ENCODE measurements at regions of chr3 and their contacts with region 1.

Region 1: DNA sequence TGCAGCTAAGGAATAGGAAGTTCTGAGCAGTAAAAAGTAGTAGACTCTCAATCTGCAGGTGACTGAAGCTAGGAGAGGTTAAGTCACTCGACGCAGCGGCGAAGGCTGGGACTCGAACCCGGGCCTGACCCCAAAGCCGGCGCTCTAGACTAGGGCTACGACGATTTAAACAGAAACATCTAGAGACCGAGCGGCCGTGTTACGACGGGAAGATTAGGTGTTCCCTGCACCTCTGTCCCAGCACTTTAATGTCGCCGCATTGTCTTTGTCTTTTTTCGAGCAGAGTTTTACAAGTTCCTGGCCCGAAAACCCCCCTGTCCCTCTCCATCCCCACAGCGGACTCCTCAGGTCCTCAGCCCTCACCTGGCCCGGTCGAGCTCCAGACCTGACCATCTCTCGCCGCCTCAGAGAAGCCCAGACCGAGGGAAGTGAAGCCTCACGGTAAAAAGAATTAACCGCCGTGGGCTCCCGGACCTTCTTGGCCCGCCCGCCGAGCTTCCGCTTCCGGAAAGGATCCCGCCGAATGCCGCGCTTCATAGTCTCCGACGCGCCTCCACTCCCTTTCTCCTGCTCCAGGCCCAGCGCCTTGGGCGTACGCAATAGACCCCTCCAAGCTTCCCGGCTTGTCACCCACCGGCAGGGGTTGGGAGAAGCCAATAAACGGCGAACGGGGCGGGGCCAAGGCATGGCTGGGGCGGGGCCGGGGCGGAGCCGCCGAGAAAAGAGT is at the start of gene CCDC14:
- DNase-seq: peak; percentile 68
- H3K4me3 Mint-ChIP-seq: peak within 1 kb of the TSS; percentile 95
- H3K27ac Mint-ChIP-seq: peak within 1 kb of the TSS; percentile 88
- H3K4me1 Mint-ChIP-seq: peaks cover 30% of the 10 kb centered on the region
- H3K27me3 Mint-ChIP-seq: peaks cover 17% of the 10 kb centered on the region
- total RNA-seq, gene CCDC14: 37.3 and 43.7 TPM in 2 replicates

Region 2: DNA sequence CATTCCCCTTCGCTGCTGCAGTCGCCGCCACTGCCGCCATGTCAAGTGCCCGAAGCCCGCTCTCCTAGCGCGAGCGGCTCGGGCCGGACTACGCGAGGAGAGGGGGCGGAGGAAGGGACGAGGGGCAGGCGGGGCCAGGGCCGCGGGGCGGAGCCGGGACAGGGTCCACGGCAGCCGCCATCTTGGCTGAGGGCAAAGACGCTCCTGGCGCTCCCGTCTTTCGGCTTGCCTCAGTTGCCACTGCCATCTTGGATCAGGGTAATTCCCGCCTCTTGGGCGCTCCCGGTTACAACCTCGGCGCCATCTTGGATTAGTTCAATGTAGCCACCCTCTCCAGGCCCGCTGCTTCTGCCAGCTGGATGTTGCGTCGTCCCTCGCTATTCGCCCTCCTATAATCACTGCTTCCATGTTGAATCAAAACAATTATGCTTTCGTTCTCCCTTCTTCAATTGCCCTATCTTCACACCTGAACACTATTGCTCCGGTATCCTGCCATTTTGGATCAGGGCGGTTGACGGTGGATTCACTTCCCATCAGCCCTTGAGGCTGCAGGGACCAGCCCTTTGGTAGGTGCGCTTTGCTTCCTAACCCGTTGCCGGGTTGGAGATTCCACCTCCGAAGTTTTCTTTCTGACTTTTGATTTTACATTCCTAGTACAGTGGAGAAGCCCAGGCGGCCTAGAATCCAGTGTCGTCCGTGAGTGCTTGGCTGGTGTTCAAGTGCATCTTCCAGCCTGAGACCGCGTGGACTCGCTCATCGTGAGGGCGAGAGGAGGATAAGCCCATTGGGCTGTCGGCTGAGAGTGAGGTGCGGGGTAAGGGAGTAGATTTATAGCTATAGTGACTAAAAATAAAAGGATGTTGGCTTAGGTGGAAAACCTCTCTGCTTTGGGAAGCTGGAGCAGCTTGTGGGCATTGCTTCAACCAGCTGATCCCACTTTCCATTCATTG is 375.7 kb before region 1 on chr3 and contains the start of gene HACD2:
- intact Hi-C with region 1: loop called (anchors 1 kb)
- DNase-seq: peak; percentile 93
- H3K4me3 Mint-ChIP-seq: no peak within 1 kb of the TSS
- H3K27ac Mint-ChIP-seq: peak within 1 kb of the TSS; percentile 63
- H3K4me1 Mint-ChIP-seq: peaks cover 23% of the 10 kb centered on the region
- H3K27me3 Mint-ChIP-seq: no peaks in the 10 kb centered on the region
- total RNA-seq, gene HACD2: 31.5 TPM in 2 replicates

Region 3: DNA sequence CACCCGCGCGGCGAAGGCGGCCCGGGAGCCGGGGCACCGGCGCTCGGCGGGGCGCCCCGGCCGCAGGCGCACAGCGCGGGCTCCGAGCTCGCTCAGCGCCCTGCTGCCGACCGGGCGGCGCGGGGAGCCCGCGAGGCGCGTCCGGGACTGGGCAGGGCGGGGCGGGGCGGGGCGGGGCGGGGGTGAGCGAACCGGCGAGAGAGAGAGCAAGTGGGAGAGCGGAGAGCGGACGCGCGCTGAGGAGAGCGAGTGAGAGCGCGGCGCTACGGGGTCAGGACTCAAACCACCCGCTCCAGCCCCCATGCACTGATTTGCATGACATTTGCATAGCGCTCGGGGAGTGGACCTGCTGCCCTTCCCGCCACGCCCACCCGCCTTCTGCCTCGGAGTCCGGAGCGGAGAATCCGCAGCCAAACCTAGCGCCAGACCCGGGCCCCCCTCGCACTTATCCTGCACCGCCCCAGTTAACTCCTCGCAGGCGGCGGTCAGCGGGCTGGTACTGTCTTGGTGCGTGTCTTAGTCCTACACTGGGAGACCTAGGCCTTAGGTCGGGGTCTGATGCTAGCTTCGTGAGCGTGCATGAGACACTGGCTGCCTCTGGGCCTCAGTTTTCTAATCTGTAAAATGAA is 76.6 kb before region 1 on chr3 and contains the start of gene MYLK:
- intact Hi-C with region 1: loop called (anchors 1 kb)
- DNase-seq: peak; percentile 49
- H3K4me3 Mint-ChIP-seq: peak within 1 kb of the TSS; percentile 79
- H3K27ac Mint-ChIP-seq: no peak within 1 kb of the TSS
- H3K4me1 Mint-ChIP-seq: peaks cover 13% of the 10 kb centered on the region
- H3K27me3 Mint-ChIP-seq: peaks cover 55% of the 10 kb centered on the region
- total RNA-seq, gene MYLK: 0.08 and 0.27 TPM in 2 replicates

Region 4: DNA sequence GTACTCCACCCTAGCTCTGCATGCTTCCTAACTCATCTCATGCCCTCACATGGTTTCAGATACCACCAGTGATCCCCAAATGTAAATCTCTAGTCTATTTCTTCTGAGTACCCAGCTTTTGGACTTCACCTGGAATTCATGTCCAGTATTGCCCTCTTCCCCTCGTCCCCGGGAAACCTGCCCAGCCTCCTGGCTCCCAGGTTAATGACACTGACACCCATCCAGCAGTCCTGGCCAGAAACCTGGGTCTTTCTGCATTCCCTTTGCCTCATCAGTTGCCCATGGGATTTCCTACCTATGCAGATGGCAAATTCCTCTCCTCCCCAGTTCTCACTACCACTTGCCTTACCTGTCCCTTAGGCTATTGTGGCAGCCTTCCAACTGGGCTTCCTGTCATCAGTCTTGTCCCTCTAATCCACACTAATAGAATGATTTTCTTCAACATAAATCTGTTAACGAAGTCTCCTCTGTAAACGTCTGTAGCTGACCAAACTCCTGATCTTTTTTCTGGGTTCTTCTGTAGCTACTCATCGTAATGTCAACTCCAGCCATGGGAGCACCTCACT is 61.6 kb before region 1 on chr3:
- intact Hi-C with region 1: no loop called
- DNase-seq: no peak
- H3K4me3 Mint-ChIP-seq: no peak overlapping the region
- H3K27ac Mint-ChIP-seq: no peak overlapping the region
- H3K4me1 Mint-ChIP-seq: no peaks in the 10 kb centered on the region
- H3K27me3 Mint-ChIP-seq: peaks cover 15% of the 10 kb centered on the region

Region 5: DNA sequence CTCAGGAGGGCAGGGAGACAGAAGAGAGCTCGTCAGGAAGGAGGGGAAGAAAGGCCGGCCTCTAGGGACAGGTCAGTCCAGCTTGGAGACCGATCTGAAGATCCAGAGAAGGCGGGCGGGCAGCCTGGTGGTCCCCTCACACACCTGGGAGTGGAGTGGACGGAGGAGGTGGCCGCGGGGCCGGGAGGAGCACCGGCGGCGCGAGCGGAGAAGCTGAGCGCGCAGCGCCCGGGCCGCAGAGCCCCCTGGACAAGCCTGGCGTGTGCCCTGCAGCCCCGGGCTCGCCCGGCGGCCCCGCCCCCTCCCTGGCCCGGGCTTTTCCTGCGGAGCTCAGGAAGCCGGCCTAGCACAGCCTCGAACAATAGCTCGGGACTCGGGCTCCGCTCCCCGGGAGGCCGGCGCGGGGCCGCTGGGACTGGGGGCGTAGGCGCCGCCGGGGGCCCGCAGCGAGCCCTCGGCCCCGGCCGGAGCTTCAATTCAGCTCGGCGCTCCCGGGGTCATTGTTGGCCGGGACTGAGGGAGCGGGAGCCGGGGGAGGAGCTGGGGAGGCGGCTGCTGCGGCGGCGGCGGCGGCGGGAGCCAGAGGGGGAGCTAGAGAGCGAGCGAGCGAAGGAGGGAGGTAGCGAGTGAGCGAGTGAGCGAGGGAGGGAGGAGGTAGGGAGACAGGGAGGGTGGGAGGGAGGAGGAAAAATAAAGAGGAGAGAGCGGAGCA is 71.9 kb after region 1 on chr3:
- intact Hi-C with region 1: loop called (anchors 5 kb)
- DNase-seq: peak; percentile 53
- H3K4me3 Mint-ChIP-seq: peak overlapping the region; percentile 81
- H3K27ac Mint-ChIP-seq: no peak overlapping the region
- H3K4me1 Mint-ChIP-seq: peaks cover 12% of the 10 kb centered on the region
- H3K27me3 Mint-ChIP-seq: peaks cover 52% of the 10 kb centered on the region

Measured in activated T-helper 1 cell treated with anti-CD3 and anti-CD28 coated beads, Interleukin-12 subunit alpha, Interleukin-12 subunit beta, Interleukin-2, Interleukin-4 antibody, amounts not matched to agents 30 ng/mL and 10 ng/mL and 1 ng/mL, durations not matched to agents 14 hours and 24 hours and 36 hours (primary cell).